Spleen (tissue), 13 donors: ENCODE measurements at regions of chr11 and their contacts with region 1.

Region 1: GRCh38 chr11:68066742-68067141 is 27.9 kb downstream of the TCIRG1 start:
- DNase-seq: no peak
- H3K4me3 ChIP-seq: no peak overlapping the region
- H3K27ac ChIP-seq: no peak overlapping the region
- H3K4me1 ChIP-seq: peaks cover 0 to 32% (median 10%) of the 10 kb centered on the region in 6 donors
- H3K27me3 ChIP-seq: no peaks in the 10 kb centered on the region
- CTCF ChIP-seq: no peak
- POLR2A ChIP-seq: no peak

Region 2: GRCh38 chr11:68206187-68206601 is 139.5 kb after region 1 on chr11:
- intact Hi-C with region 1: loop called (anchors 10 kb)
- DNase-seq: peak; percentile 27
- H3K4me3 ChIP-seq: no peak overlapping the region
- H3K27ac ChIP-seq: peak overlapping the region in 1 of 8 donors; percentile 13
- H3K4me1 ChIP-seq: peaks cover 26 to 100% (median 79%) of the 10 kb centered on the region in 6 donors
- H3K27me3 ChIP-seq: no peaks in the 10 kb centered on the region
- CTCF ChIP-seq: peak; percentile 52 to 90 (median 81)
- POLR2A ChIP-seq: no peak